ENCODE measurements at regions of chr19 and their contacts with region 1.

Region 1: DNA sequence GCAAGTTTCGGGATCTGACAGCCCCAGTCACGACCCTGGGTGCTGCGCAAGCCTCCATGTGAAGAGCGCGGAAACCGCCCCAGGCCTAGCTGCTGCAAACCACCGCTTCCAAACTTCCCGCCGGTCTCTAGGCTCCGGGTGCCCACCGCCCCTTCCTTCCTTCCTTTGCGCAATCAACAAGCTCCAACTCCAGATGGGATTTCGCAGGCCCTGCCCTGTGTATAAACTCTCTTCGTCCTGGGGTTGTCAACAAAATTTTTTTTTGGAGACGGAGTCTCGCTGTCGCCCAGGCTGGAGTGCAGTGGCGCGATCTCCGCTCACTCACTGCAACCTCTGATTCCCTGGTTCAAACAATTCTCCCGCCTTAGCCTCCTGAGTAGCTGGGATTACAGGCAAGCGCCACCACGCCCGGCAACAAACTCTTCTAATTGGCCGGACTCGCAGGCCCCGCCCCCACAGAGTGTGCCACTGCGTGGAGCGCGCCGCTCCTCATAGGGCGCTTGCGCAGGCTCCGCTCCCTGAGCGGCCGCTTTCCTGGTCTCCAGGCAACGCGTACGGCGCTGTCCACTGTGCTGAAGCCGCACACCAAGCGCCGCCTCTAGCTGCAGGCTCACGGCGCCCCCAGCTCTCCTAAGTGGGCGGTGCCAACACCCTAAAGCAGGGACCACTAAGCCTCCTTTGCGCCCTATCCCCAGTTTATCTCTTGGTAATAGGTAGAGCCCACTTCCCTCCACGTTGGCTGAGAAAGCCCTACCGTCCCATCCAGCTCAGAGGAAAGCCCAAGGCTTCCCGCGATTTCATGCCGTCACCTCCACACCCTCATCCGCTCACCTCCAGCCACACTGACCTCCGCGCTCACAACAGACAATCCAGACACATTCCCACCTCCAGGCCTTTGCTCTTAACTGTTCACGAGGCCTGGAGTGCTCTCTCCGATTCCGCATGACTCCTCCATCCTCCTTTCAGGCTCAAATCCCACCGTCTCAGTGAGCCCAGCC is 5.5 kb upstream of the QTRT1 start:
- DNase-seq: peak; percentile 98
- H3K4me3 ChIP-seq: peak overlapping the region; percentile 13 to 45 (median 20)
- H3K27ac ChIP-seq: no peak overlapping the region
- H3K4me1 ChIP-seq: peaks cover 7% of the 10 kb centered on the region
- H3K27me3 ChIP-seq: no peaks in the 10 kb centered on the region
- CTCF ChIP-seq: no peak
- POLR2A ChIP-seq: no peak

Region 2: DNA sequence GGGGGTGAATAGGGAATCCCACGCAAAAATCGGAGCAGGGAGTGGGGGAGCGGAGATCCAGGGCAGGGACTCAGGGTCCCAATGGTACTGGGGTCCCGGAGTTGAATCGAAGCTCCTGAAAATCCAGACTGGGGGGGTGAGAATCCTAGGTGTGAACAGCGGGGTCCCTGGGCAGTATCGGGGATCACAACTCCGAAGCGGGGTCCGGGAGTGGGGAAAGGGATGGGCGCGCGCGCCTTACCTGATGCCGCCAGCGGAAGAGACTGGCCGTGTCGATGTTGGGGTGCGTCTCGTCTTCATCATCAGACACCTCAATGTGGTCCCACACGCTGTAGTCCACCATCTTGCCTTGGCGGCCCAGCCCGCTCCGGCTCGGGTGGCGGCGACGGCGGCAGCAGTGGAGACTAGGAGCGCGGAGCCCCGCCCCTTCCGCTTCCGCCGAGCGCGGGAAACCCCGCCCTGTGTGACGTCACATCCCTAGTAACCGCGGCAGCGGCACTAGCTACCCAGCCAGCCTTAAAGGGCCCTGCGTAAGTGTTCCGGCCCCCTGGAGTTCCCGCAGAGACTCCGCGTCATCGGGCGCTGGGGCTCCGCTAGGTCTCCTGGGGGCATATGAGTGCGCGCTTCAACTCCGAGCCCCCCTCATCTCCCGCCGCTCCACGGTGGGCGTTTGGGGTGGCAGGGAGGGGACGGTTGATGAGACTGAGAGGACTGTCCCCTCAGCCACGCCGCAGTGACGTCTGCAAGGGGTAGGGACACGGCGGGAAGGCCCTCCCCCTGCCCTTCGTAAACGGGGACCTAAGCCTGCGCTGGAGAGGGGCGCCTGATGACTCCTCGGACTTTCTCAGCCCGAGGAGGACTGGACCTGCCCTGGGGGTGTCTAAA is 292.3 kb before region 1 on chr19 and contains the start of gene CDC37:
- CTCF ChIA-PET with region 1: interaction called, 7 read pairs
- POLR2A ChIA-PET with region 1: no interaction called
- dilution Hi-C with region 1: no loop called
- intact Hi-C with region 1: loop called (anchors 5 kb)
- DNase-seq: peak; percentile 98
- H3K4me3 ChIP-seq: peak within 1 kb of the TSS; percentile 95 to 98 (median 95)
- H3K27ac ChIP-seq: peak within 1 kb of the TSS; percentile 88
- H3K4me1 ChIP-seq: peaks cover 15% of the 10 kb centered on the region
- H3K27me3 ChIP-seq: peaks cover 12 to 23% of the 10 kb centered on the region in 2 experiments
- CTCF ChIP-seq: no peak
- POLR2A ChIP-seq: peak; percentile 97
- total RNA-seq, gene CDC37: 275 and 300 TPM in 2 replicates

Region 3: DNA sequence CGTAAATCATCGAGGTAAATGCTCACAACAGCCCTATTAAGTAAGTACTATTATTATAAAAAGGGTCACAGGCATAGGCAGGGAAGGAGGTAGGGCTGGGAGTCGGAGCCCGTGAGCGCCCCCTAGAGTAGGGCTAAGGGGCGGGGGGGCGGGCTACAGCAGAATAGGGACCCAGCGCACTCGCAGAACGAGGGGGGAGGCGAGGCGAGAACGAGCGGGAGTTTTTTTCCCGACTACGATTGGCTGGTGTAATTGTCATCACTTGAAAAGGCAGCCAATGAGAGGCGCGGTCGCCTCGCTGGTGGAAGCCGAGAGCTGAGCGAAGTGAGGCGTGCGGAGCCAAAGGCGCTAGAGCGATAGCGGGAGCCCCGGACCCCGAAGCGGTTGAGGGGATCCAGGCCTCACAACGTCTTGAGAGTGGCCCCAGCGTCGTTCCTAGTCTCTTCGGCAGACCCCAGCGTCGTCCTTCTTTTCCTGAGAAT is 216.8 kb before region 1 on chr19:
- CTCF ChIA-PET with region 1: interaction called, 24 read pairs
- POLR2A ChIA-PET with region 1: no interaction called
- dilution Hi-C with region 1: no loop called
- intact Hi-C with region 1: loop called (anchors 10 kb)
- DNase-seq: peak; percentile 95
- H3K4me3 ChIP-seq: peak overlapping the region in 1 of 3 experiments; percentile 11
- H3K27ac ChIP-seq: no peak overlapping the region
- H3K4me1 ChIP-seq: peaks cover 7% of the 10 kb centered on the region
- H3K27me3 ChIP-seq: no peaks in the 10 kb centered on the region
- CTCF ChIP-seq: peak in 1 of 2 donors; percentile 71
- POLR2A ChIP-seq: no peak

Region 4: GRCh38 chr19:10510301-10510802 is 185.3 kb before region 1 on chr19:
- CTCF ChIA-PET with region 1: interaction called, 23 read pairs
- POLR2A ChIA-PET with region 1: no interaction called
- dilution Hi-C with region 1: no loop called
- intact Hi-C with region 1: loop called (anchors 5 kb)
- DNase-seq: no peak
- H3K4me3 ChIP-seq: no peak overlapping the region
- H3K27ac ChIP-seq: no peak overlapping the region
- H3K4me1 ChIP-seq: no peaks in the 10 kb centered on the region
- H3K27me3 ChIP-seq: peaks cover 21 to 29% of the 10 kb centered on the region in 2 experiments
- CTCF ChIP-seq: peak; percentile 66 to 80
- POLR2A ChIP-seq: no peak

Region 5: DNA sequence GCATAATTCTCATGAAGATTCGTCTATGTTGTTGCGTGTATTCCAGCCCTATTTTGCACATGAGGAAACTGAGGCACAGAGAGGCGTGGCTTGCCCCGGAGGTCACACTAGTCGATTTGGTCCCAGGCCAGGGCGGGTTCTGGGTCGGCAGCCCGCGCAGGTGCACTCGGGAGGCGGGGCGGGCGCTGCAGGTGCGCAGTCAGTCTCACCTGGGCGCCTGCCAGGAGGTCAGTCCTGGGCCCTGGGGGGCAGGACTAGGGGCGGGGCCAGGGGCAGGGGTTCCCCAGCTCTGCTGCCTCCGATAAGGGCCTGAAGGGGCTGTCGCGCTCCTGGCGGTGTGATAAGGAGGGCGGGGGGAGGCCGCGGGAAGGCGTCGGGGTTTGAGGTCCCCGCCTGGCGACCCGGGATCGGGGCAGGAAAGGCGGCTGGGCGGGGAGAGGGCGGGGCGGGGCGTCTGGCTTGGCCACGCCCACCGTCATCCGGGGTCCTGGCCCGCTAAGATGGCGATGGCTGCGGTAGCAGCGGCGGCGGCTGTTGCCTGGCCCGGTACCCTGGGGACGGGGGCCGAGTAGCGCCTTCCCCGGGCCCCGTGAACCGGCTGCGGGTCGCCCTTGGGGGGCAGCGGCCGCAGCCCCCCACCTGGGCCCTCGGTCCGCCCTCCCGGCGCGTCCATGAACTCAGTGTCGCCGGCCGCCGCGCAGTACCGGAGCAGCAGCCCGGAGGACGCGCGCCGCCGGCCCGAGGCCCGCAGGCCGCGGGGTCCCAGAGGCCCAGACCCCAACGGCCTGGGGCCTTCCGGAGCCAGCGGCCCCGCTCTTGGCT is 152.1 kb before region 1 on chr19 and contains the start of gene ATG4D:
- CTCF ChIA-PET with region 1: interaction called, 36 read pairs
- POLR2A ChIA-PET with region 1: no interaction called
- dilution Hi-C with region 1: no loop called
- intact Hi-C with region 1: loop called (anchors 1 kb)
- DNase-seq: peak; percentile 58
- H3K4me3 ChIP-seq: peak within 1 kb of the TSS; percentile 36 to 91 (median 58)
- H3K27ac ChIP-seq: peak within 1 kb of the TSS; percentile 42
- H3K4me1 ChIP-seq: peaks cover 4% of the 10 kb centered on the region
- H3K27me3 ChIP-seq: no peaks in the 10 kb centered on the region
- CTCF ChIP-seq: no peak
- POLR2A ChIP-seq: peak; percentile 75
- total RNA-seq, gene ATG4D: 19.8 and 21.8 TPM in 2 replicates

Region 6: DNA sequence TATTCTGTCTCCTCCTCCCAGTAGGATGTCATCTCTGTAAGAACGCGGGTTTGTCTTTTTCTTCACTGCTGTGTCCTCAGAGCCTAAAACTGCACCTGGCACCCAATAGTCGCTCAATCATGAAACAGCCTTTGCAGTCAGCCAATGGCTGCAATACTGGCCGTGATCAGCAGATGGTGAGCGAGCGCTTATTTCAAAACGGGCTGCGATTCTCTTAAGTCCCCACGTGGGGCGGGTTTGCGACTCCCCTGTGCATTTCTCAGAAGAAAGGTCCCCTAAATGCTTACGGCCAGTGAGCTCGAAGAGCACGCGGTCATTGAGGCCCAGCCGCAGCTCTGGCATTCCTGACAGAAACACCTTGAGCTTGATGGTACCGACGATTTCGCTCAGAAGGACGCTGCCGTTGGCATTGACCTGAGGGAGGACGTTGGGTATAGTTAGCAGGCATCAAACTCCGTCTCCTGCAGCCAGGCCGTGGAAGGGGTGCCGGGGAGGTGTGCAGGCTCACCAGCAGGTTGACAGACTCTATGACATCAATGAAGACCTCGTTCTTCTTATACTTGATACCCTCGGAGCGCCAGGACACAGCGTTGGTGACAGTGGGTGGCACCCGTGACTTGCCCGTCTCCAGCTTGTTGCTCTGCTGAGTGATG is 114.6 kb before region 1 on chr19:
- CTCF ChIA-PET with region 1: interaction called, 135 read pairs
- POLR2A ChIA-PET with region 1: interaction called, 3 read pairs
- dilution Hi-C with region 1: no loop called
- intact Hi-C with region 1: loop called (anchors 1 kb)
- DNase-seq: peak; percentile 88
- H3K4me3 ChIP-seq: no peak overlapping the region
- H3K27ac ChIP-seq: no peak overlapping the region
- H3K4me1 ChIP-seq: no peaks in the 10 kb centered on the region
- H3K27me3 ChIP-seq: no peaks in the 10 kb centered on the region
- CTCF ChIP-seq: peak; percentile 98
- POLR2A ChIP-seq: no peak

Region 7: GRCh38 chr19:10653715-10654492 is 41.8 kb before region 1 on chr19 and contains the start of gene ILF3:
- CTCF ChIA-PET with region 1: interaction called, 18 read pairs
- POLR2A ChIA-PET with region 1: interaction called, 3 read pairs
- dilution Hi-C with region 1: no loop called
- intact Hi-C with region 1: loop called (anchors 1 kb)
- DNase-seq: peak; percentile 100
- H3K4me3 ChIP-seq: peak within 1 kb of the TSS; percentile 94 to 99 (median 94)
- H3K27ac ChIP-seq: peak within 1 kb of the TSS; percentile 78
- H3K4me1 ChIP-seq: peaks cover 10% of the 10 kb centered on the region
- H3K27me3 ChIP-seq: no peaks in the 10 kb centered on the region
- CTCF ChIP-seq: no peak
- POLR2A ChIP-seq: peak; percentile 92
- total RNA-seq, gene ILF3: 425 and 459 TPM in 2 replicates

Region 8: DNA sequence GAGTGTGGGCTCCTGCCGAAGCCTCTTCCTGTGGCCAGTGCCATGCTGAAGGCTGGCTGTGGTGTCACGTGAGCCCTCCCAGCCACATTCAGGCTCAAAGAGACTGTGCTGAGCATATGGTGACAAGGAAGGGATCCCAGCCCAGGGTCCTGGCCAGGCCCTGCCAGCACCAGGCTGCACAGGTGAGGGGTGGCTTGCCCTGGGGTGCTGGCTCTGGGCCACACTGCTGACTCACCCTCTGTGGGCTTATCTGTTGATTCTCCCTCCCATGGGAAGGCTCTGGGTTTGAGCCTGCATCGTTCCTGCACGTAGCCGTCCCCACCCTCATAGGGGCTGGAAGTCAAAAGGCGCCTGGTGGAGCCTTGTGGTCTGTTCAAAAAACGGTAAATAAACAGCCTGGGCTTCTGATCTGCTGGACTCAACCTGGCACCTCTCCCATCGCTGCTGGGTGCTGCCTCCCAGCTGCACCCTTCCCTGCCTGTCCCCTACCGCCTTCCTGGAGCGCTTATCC is 53.3 kb after region 1 on chr19:
- CTCF ChIA-PET with region 1: no interaction called
- POLR2A ChIA-PET with region 1: no interaction called
- dilution Hi-C with region 1: no loop called
- intact Hi-C with region 1: no loop called
- DNase-seq: peak; percentile 22
- H3K4me3 ChIP-seq: no peak overlapping the region
- H3K27ac ChIP-seq: peak overlapping the region; percentile 15
- H3K4me1 ChIP-seq: peaks cover 27% of the 10 kb centered on the region
- H3K27me3 ChIP-seq: no peaks in the 10 kb centered on the region
- CTCF ChIP-seq: no peak
- POLR2A ChIP-seq: no peak

Measured in endothelial cell of umbilical vein (primary cell).